ENCODE measurements at regions of chr9 and their contacts with region 1.

Region 1: GRCh38 chr9:109903515-109904138 is 123.6 kb downstream of the PALM2AKAP2 start:
- DNase-seq: peak; percentile 82
- H3K4me3 Mint-ChIP-seq: no peak overlapping the region
- H3K27ac Mint-ChIP-seq: no peak overlapping the region
- H3K4me1 Mint-ChIP-seq: peaks cover 6% of the 10 kb centered on the region
- H3K27me3 Mint-ChIP-seq: no peaks in the 10 kb centered on the region
- CTCF ChIP-seq: peak; percentile 69

Region 2: DNA sequence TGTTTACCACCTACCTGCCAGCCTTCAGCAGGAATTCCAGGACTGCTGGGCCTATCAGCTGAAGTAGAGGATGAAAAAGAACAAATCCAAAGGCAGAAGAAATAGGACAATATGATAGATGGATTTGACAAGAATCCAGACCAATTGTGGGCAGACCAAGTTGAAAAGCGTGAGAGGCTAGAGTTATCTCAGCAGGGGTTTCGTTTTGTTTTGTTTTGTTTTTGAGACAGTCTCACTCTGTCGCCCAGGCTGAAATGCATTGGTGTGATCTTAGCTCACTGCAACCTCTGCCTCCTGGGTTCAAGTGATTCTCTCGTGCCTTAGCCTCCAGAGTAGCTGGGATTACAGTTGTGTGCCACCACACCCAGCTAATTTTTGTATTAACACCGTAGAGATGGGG is 10.4 kb before region 1 on chr9:
- CTCF ChIA-PET with region 1: interaction called, 25 read pairs
- POLR2A ChIA-PET with region 1: interaction called, 8 read pairs
- intact Hi-C with region 1: no loop called
- DNase-seq: no peak
- H3K4me3 Mint-ChIP-seq: no peak overlapping the region
- H3K27ac Mint-ChIP-seq: no peak overlapping the region
- H3K4me1 Mint-ChIP-seq: peaks cover 13% of the 10 kb centered on the region
- H3K27me3 Mint-ChIP-seq: no peaks in the 10 kb centered on the region
- CTCF ChIP-seq: no peak

Region 3: DNA sequence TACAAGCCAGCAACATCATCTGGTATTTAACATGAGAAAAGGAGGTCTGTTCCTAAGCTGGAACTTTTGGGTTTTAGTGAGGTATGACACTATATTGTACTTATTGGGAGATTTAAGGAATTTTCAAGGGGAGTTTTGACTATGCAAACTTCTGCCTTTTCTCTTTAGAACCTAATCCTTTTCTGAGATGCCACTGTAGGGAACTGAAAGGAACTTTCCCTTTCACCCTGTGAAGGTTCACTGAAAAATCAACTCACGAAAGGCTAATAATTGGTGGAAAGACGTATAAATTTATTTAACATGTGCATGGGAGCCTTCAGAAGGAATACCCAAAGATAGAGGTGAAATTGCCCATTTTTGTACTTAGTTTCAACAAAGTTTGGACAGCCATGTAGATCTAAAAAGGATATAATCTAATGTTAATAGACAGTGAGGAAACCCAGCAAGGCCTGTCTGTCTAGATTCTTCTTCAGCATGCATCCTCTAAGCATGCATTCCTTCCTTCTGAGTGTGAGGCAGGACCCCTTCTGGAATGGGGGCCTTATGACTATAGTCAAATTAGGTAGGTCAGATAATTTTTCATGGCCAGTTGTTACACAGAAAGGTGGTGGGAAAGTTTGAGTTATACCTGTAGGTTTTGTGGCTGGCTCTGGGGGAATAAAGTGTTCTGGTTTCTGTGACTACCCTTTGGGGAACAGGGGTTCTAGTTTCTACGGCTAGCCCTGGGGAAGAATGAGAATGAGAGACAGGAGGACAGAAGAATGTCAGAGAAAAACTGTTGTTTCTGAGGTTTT is 104.0 kb after region 1 on chr9:
- CTCF ChIA-PET with region 1: no interaction called
- POLR2A ChIA-PET with region 1: no interaction called
- intact Hi-C with region 1: no loop called
- DNase-seq: no peak
- H3K4me3 Mint-ChIP-seq: no peak overlapping the region
- H3K27ac Mint-ChIP-seq: no peak overlapping the region
- H3K4me1 Mint-ChIP-seq: no peaks in the 10 kb centered on the region
- H3K27me3 Mint-ChIP-seq: no peaks in the 10 kb centered on the region
- CTCF ChIP-seq: no peak

Region 4: GRCh38 chr9:110040788-110041187 is 137.2 kb after region 1 on chr9:
- CTCF ChIA-PET with region 1: no interaction called
- POLR2A ChIA-PET with region 1: no interaction called
- intact Hi-C with region 1: no loop called
- DNase-seq: no peak
- H3K4me3 Mint-ChIP-seq: no peak overlapping the region
- H3K27ac Mint-ChIP-seq: no peak overlapping the region
- H3K4me1 Mint-ChIP-seq: peaks cover 7% of the 10 kb centered on the region
- H3K27me3 Mint-ChIP-seq: no peaks in the 10 kb centered on the region
- CTCF ChIP-seq: no peak

Region 5: GRCh38 chr9:110058304-110058953 is 154.8 kb after region 1 on chr9:
- CTCF ChIA-PET with region 1: interaction called, 206 read pairs
- POLR2A ChIA-PET with region 1: interaction called, 6 read pairs
- intact Hi-C with region 1: loop called (anchors 1 kb)
- DNase-seq: peak; percentile 87
- H3K4me3 Mint-ChIP-seq: no peak overlapping the region
- H3K27ac Mint-ChIP-seq: peak overlapping the region; percentile 72
- H3K4me1 Mint-ChIP-seq: peaks cover 14% of the 10 kb centered on the region
- H3K27me3 Mint-ChIP-seq: no peaks in the 10 kb centered on the region
- CTCF ChIP-seq: peak; percentile 83

Region 6: GRCh38 chr9:110143950-110144545 is 240.4 kb after region 1 on chr9:
- CTCF ChIA-PET with region 1: interaction called, 146 read pairs
- POLR2A ChIA-PET with region 1: no interaction called
- intact Hi-C with region 1: no loop called
- DNase-seq: no peak
- H3K4me3 Mint-ChIP-seq: no peak overlapping the region
- H3K27ac Mint-ChIP-seq: no peak overlapping the region
- H3K4me1 Mint-ChIP-seq: peaks cover 35% of the 10 kb centered on the region
- H3K27me3 Mint-ChIP-seq: no peaks in the 10 kb centered on the region
- CTCF ChIP-seq: no peak

Region 7: GRCh38 chr9:110170357-110171257 is 267.0 kb after region 1 on chr9:
- CTCF ChIA-PET with region 1: interaction called, 10 read pairs
- POLR2A ChIA-PET with region 1: interaction called, 3 read pairs
- intact Hi-C with region 1: no loop called
- DNase-seq: no peak
- H3K4me3 Mint-ChIP-seq: no peak overlapping the region
- H3K27ac Mint-ChIP-seq: no peak overlapping the region
- H3K4me1 Mint-ChIP-seq: peaks cover 8% of the 10 kb centered on the region
- H3K27me3 Mint-ChIP-seq: no peaks in the 10 kb centered on the region
- CTCF ChIP-seq: no peak

Region 8: GRCh38 chr9:110228960-110229359 is 325.3 kb after region 1 on chr9:
- CTCF ChIA-PET with region 1: no interaction called
- POLR2A ChIA-PET with region 1: no interaction called
- intact Hi-C with region 1: no loop called
- DNase-seq: no peak
- H3K4me3 Mint-ChIP-seq: no peak overlapping the region
- H3K27ac Mint-ChIP-seq: no peak overlapping the region
- H3K4me1 Mint-ChIP-seq: no peaks in the 10 kb centered on the region
- H3K27me3 Mint-ChIP-seq: no peaks in the 10 kb centered on the region
- CTCF ChIP-seq: no peak

Region 9: GRCh38 chr9:110623462-110624025 is 719.9 kb after region 1 on chr9:
- CTCF ChIA-PET with region 1: no interaction called
- POLR2A ChIA-PET with region 1: no interaction called
- intact Hi-C with region 1: loop called (anchors 10 kb)
- DNase-seq: peak; percentile 77
- H3K4me3 Mint-ChIP-seq: no peak overlapping the region
- H3K27ac Mint-ChIP-seq: no peak overlapping the region
- H3K4me1 Mint-ChIP-seq: no peaks in the 10 kb centered on the region
- H3K27me3 Mint-ChIP-seq: no peaks in the 10 kb centered on the region
- CTCF ChIP-seq: peak; percentile 60